ENCODE measurements at regions of chr22 and their contacts with region 1.

Region 1: GRCh38 chr22:37538590-37539357 is 19.6 kb upstream of the CARD10 start:
- DNase-seq: peak; percentile 94 to 98 (median 97)
- ATAC-seq: peak; percentile 98 to 99
- H3K4me3 ChIP-seq: no peak overlapping the region
- H3K27ac ChIP-seq: no peak overlapping the region
- H3K4me1 ChIP-seq: no peaks in the 10 kb centered on the region
- H3K27me3 ChIP-seq: no peaks in the 10 kb centered on the region

Region 2: DNA sequence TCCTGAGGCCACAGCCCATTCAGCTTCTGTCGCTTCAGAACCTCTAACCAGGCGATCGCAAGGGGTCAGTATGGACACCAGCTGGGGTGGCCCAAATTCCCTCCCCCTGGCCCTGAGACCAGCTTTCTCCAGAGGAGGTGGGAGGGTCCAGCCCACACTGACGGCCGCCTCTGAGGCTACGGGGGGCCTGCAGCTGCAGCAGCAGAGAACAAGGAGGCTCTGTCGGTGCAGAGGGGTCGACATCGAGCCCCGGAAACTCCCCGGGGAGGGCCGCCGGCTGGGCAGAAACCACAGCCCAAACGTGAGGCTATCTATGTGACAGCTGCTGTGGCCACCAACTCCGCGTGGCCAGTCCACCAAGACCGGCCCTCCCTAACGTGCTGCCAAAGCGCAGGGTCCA is 152.3 kb before region 1 on chr22:
- intact Hi-C with region 1: no loop called
- DNase-seq: no peak
- ATAC-seq: no peak
- H3K4me3 ChIP-seq: no peak overlapping the region
- H3K27ac ChIP-seq: no peak overlapping the region
- H3K4me1 ChIP-seq: no peaks in the 10 kb centered on the region
- H3K27me3 ChIP-seq: no peaks in the 10 kb centered on the region

Region 3: DNA sequence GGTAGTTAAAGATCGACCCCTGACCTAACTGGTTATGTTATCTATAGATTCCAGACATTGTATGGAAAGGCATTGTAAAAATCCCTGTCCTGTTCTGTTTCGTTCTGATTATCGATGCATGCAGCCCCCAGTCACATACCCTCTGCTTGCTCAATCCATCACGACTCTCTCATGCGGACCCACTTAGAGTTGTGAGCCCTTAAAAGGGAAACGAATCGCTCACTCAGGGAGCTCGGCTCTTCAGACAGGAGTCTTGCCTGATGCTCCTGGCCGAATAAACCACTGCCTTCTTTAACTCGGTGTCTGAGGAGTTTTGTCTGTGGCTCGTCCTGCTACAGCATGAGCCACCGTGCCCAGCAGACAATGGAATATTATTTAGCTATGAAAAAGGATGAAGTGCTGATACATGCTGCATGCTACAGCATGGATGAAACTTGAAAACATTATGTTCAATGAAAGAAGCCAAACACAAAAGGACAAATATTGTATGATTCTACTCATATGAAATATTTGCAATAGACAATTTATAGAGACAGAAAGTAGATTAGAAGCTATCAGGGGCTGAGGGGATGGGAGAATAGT is 53.1 kb after region 1 on chr22:
- intact Hi-C with region 1: loop called in 3 of 4 experiments (anchors 2 to 10 kb)
- DNase-seq: no peak
- ATAC-seq: no peak
- H3K4me3 ChIP-seq: no peak overlapping the region
- H3K27ac ChIP-seq: no peak overlapping the region
- H3K4me1 ChIP-seq: no peaks in the 10 kb centered on the region
- H3K27me3 ChIP-seq: no peaks in the 10 kb centered on the region

Region 4: DNA sequence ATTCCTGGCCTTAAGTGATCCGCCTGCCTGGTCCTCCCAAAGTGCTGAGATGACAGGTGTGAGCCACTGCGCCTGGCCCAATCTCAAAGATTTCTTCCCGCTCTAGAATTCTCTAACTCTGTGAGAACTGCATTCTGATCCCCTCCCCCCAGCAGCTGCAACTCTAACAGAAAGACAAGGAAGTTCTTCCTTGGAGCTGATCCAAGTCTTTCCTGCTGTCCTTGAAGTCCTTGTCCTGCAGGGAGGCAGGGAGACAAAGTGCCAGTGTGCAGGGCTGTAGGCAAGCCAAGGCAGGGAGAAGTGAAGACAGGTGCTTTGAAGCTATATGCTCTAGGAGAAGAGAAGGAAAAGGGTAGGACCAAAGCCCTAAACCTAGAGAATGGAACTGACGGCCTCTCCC is 60.4 kb after region 1 on chr22:
- intact Hi-C with region 1: loop called in 2 of 4 experiments (anchors 5 to 10 kb)
- DNase-seq: no peak
- ATAC-seq: no peak
- H3K4me3 ChIP-seq: no peak overlapping the region
- H3K27ac ChIP-seq: no peak overlapping the region
- H3K4me1 ChIP-seq: no peaks in the 10 kb centered on the region
- H3K27me3 ChIP-seq: no peaks in the 10 kb centered on the region